A673 (cell line): ENCODE measurements at regions of chr16 and their contacts with region 1.

Region 1: DNA sequence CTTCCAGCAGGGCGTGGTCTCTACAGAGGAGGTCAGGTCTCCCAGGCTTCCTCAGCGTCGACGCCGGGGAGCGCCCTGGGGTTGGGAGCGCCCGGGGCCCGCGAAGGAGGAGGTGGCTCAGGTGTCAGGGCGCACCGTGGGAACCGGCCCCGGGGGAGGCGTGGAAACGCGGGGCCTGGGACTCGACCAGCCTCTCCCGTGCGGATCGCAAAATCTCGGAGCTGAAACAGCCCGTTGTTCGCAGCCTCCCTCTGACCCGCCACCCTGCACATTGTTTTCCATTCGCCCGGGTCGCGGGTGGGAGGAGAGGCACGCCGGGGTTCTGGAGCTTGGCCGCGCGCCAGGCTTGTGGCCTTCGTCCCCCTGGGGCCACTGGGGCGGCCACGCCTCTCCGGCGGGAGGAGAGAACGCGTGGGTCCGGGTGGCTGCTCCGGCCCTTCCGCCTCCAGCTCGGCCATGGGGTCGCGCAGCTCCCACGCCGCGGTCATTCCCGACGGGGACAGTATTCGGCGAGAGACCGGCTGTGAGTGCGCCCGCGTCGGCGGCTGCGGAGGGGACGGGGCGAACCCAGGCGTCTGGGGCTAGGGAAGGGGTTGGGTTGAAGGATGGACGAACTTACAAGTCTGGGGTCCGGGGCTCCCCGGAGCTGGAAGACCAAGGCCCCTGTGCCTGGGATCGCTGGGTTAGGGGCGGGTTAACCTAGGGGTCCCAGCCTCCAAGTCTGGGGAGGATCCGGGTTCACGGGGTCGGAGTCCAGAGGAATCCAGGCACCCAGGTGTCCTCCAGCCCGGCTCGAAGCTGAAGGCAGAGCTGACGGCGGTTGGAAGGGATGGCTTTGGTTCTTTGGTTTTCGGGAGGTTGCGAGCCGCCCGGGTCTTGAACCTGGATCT is at the start of gene CHP2:
- DNase-seq: peak; percentile 18
- H3K4me3 ChIP-seq: peak within 1 kb of the TSS; percentile 40
- H3K27ac ChIP-seq: no peak within 1 kb of the TSS
- H3K4me1 ChIP-seq: no peaks in the 10 kb centered on the region
- H3K27me3 ChIP-seq: no peaks in the 10 kb centered on the region
- CTCF ChIP-seq: no peak
- total RNA-seq, gene CHP2: 0.99 and 1.0 TPM in 2 replicates

Region 2: GRCh38 chr16:23668873-23669272 is 86.0 kb before region 1 on chr16:
- CTCF ChIA-PET with region 1: no interaction called
- POLR2A ChIA-PET with region 1: interaction called, 10 read pairs
- intact Hi-C with region 1: no loop called
- DNase-seq: no peak
- H3K4me3 ChIP-seq: no peak overlapping the region
- H3K27ac ChIP-seq: no peak overlapping the region
- H3K4me1 ChIP-seq: no peaks in the 10 kb centered on the region
- H3K27me3 ChIP-seq: no peaks in the 10 kb centered on the region
- CTCF ChIP-seq: no peak

Region 3: DNA sequence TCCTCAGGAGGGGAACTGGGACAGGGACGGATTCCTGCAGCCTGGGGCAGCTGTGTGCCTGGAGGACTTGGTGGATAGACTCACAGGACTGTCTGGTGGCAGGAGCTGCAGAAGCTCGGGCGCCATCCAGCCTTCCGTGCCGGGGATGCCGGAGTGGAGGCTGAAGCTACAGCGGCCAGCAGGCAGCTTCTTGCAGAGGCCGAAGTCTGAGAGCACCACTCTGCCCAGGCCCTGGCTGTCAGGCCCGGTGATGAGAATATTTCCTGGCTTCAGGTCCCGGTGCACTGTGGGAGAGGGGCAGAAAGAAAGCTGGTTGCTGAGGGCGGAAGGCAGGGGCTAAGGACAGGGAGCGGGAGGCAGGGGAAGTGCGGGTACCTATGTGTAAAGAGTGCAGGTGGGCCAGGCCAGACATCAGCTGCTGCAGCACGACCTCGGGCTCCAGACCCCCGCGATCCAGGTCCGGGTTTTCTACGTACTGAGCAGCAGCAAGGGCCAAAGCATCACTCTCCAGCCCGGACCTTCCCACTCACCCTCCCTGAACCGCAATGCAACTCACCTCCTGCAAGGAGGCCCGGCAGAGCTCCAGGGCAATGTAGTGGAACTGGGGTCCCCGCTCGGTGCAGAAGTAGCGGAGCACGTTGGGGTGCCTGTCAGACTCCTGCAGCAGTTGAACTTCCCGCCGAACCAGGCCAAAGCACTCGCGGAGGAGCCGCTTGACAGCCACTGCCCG is 60.0 kb before region 1 on chr16:
- CTCF ChIA-PET with region 1: no interaction called
- POLR2A ChIA-PET with region 1: no interaction called
- intact Hi-C with region 1: loop called (anchors 10 kb)
- DNase-seq: no peak
- H3K4me3 ChIP-seq: no peak overlapping the region
- H3K27ac ChIP-seq: no peak overlapping the region
- H3K4me1 ChIP-seq: no peaks in the 10 kb centered on the region
- H3K27me3 ChIP-seq: no peaks in the 10 kb centered on the region
- CTCF ChIP-seq: no peak

Region 4: DNA sequence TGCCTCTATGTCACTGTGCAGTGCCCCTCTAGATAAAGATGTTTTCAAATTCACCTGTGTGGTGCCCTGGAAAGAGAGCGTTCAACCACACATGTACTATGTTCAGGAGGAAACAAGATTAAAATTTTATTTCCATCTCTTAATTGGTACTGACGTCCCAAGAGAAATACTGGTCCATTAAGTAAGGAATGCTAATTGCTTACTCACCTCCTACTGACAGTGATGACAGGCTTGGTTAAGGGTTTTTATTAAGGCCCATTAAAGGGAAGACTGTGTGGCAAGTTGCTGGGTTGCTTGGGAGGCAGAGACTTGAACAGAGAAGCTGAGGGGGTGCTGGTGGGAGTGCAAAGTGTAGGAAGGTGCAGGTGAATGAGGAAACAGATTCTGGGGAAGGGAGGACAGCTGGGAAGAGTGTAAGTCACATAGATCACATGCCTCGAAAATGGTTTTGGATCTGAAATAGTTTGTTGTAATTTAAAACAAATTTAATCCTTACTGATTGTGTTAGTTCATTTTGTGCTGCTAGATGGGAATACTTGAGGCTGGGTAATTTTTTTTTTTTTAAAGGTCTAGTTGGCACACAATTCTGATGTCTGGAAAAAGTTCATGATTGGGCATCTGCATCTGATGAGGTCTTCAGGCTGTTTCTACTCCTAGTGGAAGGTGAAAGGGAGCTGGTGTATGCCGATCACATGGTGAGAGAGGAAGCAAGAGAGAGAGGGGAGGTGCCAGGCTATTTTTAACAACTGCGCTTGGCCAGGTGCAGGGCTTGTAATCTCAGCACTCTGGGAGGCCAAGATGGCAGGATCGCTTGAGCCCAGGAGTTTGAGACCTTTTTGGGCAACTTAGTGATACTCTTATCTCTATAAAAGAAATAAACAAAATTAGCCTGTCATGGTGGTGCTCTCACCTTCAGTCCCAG is 641.8 kb after region 1 on chr16:
- CTCF ChIA-PET with region 1: no interaction called
- POLR2A ChIA-PET with region 1: no interaction called
- intact Hi-C with region 1: no loop called
- DNase-seq: peak; percentile 56
- H3K4me3 ChIP-seq: no peak overlapping the region
- H3K27ac ChIP-seq: no peak overlapping the region
- H3K4me1 ChIP-seq: peaks cover 17% of the 10 kb centered on the region
- H3K27me3 ChIP-seq: no peaks in the 10 kb centered on the region
- CTCF ChIP-seq: no peak